ENCODE measurements at regions of chr7 and their contacts with region 1.

Region 1: DNA sequence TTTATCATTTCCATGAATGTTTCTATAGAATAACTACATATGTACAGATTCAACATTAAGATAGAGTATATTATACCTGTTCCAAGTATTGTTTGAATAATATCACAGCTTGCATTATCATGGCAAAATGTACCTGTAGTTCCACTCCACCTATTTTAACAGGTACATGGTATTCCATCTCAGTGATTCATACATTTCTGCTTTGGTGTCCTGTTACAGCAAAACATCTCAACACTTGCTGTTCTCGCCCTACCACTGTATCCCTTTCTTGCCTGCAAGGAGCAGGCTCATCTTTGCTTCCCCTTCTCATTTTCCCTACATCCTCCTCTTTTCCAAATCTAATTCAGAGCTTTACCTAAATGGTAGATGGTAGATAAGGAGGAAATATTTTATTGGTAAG is 27.1 kb upstream of the SGCE start:
- DNase-seq: no peak
- H3K4me3 ChIP-seq: no peak overlapping the region
- H3K27ac ChIP-seq: no peak overlapping the region
- H3K4me1 ChIP-seq: no peaks in the 10 kb centered on the region
- H3K27me3 ChIP-seq: no peaks in the 10 kb centered on the region
- CTCF ChIP-seq: no peak
- EP300 ChIP-seq: no peak
- POLR2A ChIP-seq: no peak

Region 2: GRCh38 chr7:94657771-94658693 is 25.0 kb before region 1 on chr7:
- in situ Hi-C with region 1: no loop called
- intact Hi-C with region 1: no loop called
- DNase-seq: peak; percentile 96
- H3K4me3 ChIP-seq: peak overlapping the region in 3 of 4 donors; percentile 12 to 66 (median 39)
- H3K27ac ChIP-seq: peak overlapping the region; percentile 42 to 77 (median 70)
- H3K4me1 ChIP-seq: peaks cover 0 to 35% (median 9%) of the 10 kb centered on the region in 4 donors
- H3K27me3 ChIP-seq: peaks cover 35% of the 10 kb centered on the region
- CTCF ChIP-seq: no peak
- EP300 ChIP-seq: no peak
- POLR2A ChIP-seq: no peak

Region 3: GRCh38 chr7:94748371-94748770 is 65.3 kb after region 1 on chr7:
- in situ Hi-C with region 1: no loop called
- intact Hi-C with region 1: loop called (anchors 2 kb)
- DNase-seq: no peak
- H3K4me3 ChIP-seq: no peak overlapping the region
- H3K27ac ChIP-seq: no peak overlapping the region
- H3K4me1 ChIP-seq: no peaks in the 10 kb centered on the region
- H3K27me3 ChIP-seq: no peaks in the 10 kb centered on the region
- CTCF ChIP-seq: no peak
- EP300 ChIP-seq: no peak
- POLR2A ChIP-seq: no peak

Region 4: DNA sequence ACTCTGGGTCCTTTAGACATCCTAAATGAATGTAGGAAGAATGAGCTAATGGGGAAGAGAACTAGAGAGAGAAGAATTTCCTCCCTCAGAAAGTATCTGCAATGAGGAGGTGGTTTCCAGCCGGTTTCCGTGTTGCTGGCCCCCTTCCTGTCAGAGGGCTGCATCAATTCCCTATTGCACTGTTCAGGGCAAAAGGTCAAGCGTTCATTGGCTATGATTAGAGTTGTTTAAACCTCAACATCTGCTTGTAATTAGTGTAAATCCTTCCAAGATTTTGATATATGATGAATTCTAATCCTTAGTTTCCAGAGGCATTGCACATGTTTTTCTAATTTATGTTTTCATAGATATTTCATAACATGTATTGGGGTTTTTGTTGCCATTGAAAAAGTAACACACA is 80.2 kb after region 1 on chr7:
- in situ Hi-C with region 1: no loop called
- intact Hi-C with region 1: no loop called
- DNase-seq: no peak
- H3K4me3 ChIP-seq: no peak overlapping the region
- H3K27ac ChIP-seq: no peak overlapping the region
- H3K4me1 ChIP-seq: no peaks in the 10 kb centered on the region
- H3K27me3 ChIP-seq: no peaks in the 10 kb centered on the region
- CTCF ChIP-seq: no peak
- EP300 ChIP-seq: no peak
- POLR2A ChIP-seq: no peak

Region 5: DNA sequence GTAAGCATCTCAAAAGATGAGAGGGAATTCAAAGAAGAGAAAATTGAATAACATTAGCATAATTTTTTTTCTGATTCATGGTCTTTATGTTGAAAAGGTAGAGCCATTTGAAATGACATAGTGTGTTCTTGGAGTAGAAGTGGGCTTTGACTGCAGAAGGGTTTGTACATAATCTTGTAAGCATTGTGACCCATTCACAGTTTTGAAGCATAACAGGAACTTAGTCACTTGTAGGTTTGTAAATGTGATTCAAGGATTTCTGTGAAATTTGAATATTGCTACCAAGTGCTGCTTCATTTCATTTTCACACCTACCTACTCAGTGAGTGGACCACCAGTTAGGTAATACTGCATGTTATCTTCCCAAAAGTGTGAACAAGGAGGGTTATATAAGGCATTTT is 572.6 kb after region 1 on chr7:
- in situ Hi-C with region 1: no loop called
- intact Hi-C with region 1: no loop called
- DNase-seq: no peak
- H3K4me3 ChIP-seq: no peak overlapping the region
- H3K27ac ChIP-seq: no peak overlapping the region
- H3K4me1 ChIP-seq: no peaks in the 10 kb centered on the region
- H3K27me3 ChIP-seq: no peaks in the 10 kb centered on the region
- CTCF ChIP-seq: no peak
- EP300 ChIP-seq: no peak
- POLR2A ChIP-seq: no peak

Measured in transverse colon (tissue), 4 donors.